B cell (primary cell): ENCODE measurements at regions of chr7 and their contacts with region 1.

Region 1: DNA sequence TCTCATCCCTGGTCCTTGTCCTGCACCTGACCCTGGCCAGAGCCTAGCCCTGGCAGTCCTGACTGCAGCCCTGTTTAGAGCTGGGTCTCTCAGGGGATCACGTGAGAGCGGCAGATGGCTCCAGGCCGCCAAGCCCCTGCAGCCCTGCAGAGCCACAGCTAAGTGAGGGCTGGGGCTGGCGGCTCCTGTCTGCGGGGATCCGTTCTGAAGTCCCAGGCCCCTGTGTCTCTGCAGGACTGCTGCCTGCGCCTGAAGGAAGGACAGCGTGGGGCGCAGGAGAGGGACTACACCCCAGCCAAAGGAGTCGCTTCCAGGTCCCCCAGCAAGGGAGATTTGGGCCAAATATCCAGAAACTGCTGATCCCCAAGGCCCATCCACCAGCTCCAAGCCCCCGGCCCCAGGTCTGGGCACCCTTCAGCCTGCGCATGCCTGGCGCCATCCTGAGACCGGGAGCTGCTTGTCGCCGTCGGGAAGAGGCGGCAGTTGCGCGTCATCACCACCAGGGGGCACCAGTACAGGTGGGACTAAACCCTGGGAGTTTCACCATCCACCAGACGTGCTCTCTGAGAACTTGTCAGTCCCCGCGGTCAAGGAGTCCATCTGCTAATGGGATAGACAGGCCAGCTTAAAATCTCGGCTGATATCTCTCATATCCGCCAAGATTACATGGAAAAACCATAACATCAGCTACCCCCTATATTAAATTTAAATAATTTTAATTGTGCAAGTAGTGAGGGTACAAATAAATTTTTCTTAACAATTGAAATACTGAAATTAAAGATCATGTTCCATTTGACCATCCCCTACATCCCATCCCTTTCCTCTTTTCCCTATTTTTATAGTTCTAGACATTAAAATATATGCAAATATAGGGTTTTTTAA is 25.1 kb upstream of the GHRHR start:
- DNase-seq: peak; percentile 57
- ATAC-seq: peak; percentile 39
- H3K4me3 ChIP-seq: no peak overlapping the region
- H3K4me3 Mint-ChIP-seq: no peak overlapping the region
- H3K27ac ChIP-seq: no peak overlapping the region
- H3K27ac Mint-ChIP-seq: no peak overlapping the region
- H3K4me1 ChIP-seq: peaks cover 0 to 3% of the 10 kb centered on the region in 2 donors
- H3K4me1 Mint-ChIP-seq: no peaks in the 10 kb centered on the region
- H3K27me3 ChIP-seq: peaks cover 0 to 16% (median 2%) of the 10 kb centered on the region in 4 experiments
- H3K27me3 Mint-ChIP-seq: peaks cover 29% of the 10 kb centered on the region
- CTCF ChIP-seq: peak; percentile 78

Region 2: DNA sequence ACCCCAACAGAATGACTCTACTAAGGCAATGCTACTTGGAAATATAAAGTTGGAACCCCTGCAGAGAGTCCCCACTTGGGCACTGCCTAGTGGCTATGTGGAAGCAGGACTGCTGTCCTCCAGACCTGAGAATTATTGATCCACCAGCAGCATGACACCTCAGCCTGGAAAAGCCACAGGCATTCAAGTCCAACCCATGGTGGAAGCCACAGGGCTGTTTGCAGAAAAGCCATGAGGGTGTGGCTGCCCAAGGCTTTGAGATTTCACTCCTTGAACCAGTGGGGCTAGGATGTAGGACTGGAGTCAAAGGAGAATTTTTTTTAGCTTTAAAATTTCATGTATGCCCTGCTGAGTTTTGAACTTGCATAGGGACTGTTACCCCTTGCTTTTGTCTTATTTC is 11.5 kb after region 1 on chr7:
- CTCF ChIA-PET with region 1: no interaction called
- POLR2A ChIA-PET with region 1: no interaction called
- intact Hi-C with region 1: no loop called
- DNase-seq: no peak
- ATAC-seq: no peak
- H3K4me3 ChIP-seq: no peak overlapping the region
- H3K4me3 Mint-ChIP-seq: no peak overlapping the region
- H3K27ac ChIP-seq: no peak overlapping the region
- H3K27ac Mint-ChIP-seq: no peak overlapping the region
- H3K4me1 ChIP-seq: no peaks in the 10 kb centered on the region
- H3K4me1 Mint-ChIP-seq: no peaks in the 10 kb centered on the region
- H3K27me3 ChIP-seq: peaks cover 0 to 4% (median 0%) of the 10 kb centered on the region in 4 experiments
- H3K27me3 Mint-ChIP-seq: peaks cover 30% of the 10 kb centered on the region
- CTCF ChIP-seq: no peak

Region 3: DNA sequence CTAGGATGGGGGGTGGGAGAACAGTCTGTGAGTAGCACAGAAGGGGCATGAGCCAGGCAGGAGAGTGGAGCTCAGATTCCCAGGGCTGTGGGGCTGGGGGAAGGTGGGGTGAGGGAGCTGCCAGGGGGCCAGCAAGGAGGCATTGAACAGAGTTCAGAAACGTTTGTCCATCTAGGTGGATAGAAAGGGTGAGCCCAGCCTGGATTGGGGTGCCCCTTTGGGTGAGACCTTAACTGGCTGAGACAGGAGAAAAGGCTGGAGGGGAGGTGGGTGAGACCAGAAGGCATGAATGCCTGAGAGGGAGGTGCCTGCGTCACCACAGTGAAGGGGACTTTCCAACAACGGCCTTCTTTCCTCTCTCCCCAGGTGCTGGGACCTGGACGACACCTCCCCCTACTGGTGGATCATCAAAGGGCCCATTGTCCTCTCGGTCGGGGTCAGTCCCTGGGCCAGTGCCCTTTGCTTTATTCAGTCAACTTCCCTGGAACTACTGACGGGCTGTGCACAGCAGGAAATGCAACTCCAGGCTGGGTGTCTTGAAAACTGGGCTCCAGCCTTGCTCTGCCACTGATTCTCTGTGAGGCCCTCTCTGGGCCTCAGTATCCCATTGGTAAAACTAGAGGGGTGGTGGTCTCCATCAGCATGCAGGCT is 36.1 kb after region 1 on chr7:
- CTCF ChIA-PET with region 1: interaction called, 12 read pairs
- POLR2A ChIA-PET with region 1: no interaction called
- intact Hi-C with region 1: no loop called
- DNase-seq: peak; percentile 55
- ATAC-seq: peak; percentile 68
- H3K4me3 ChIP-seq: no peak overlapping the region
- H3K4me3 Mint-ChIP-seq: no peak overlapping the region
- H3K27ac ChIP-seq: no peak overlapping the region
- H3K27ac Mint-ChIP-seq: no peak overlapping the region
- H3K4me1 ChIP-seq: peaks cover 0 to 6% of the 10 kb centered on the region in 2 donors
- H3K4me1 Mint-ChIP-seq: peaks cover 14% of the 10 kb centered on the region
- H3K27me3 ChIP-seq: peaks cover 0 to 5% (median 0%) of the 10 kb centered on the region in 4 experiments
- H3K27me3 Mint-ChIP-seq: peaks cover 27% of the 10 kb centered on the region
- CTCF ChIP-seq: peak; percentile 35